ENCODE measurements at regions of chr3 and their contacts with region 1.

Region 1: GRCh38 chr3:14921078-14921616 is 26.2 kb upstream of the NR2C2 start:
- DNase-seq: peak; percentile 79
- H3K4me3 Mint-ChIP-seq: no peak overlapping the region
- H3K27ac Mint-ChIP-seq: no peak overlapping the region
- H3K4me1 Mint-ChIP-seq: no peaks in the 10 kb centered on the region
- H3K27me3 Mint-ChIP-seq: peaks cover 26% of the 10 kb centered on the region
- CTCF ChIP-seq: peak; percentile 99

Region 2: DNA sequence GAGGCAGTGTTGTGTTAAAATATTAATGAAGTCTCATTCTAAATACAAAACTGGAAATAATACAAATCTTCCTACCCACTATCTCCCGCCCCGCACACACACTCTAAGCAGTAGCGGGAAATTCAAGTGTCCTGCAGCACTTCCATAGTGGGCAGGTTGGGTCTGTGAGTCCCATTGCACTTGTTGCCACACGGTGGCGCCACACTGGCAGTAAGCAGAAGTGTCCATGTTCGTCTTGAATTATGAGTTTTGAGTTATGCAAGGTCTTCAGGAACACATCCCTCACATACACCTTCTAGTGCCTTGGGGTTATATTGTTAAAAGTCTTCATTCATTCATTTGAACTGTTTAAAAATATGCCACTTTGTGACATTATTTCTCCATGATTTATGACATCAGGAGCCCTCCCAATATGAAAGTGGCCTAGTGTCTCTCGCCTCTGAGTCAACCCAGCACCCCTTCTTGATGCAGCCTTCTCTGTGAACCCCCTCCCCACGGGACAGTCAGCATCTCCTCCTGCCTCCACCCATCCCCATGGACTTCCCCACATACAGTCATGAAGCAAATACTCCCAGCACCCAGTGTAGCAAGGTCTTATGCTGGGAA is 287.2 kb before region 1 on chr3:
- CTCF ChIA-PET with region 1: interaction called, 10 read pairs
- POLR2A ChIA-PET with region 1: no interaction called
- intact Hi-C with region 1: loop called (anchors 1 kb)
- DNase-seq: peak; percentile 73
- H3K4me3 Mint-ChIP-seq: no peak overlapping the region
- H3K27ac Mint-ChIP-seq: no peak overlapping the region
- H3K4me1 Mint-ChIP-seq: no peaks in the 10 kb centered on the region
- H3K27me3 Mint-ChIP-seq: peaks cover 13% of the 10 kb centered on the region
- CTCF ChIP-seq: peak; percentile 74

Region 3: DNA sequence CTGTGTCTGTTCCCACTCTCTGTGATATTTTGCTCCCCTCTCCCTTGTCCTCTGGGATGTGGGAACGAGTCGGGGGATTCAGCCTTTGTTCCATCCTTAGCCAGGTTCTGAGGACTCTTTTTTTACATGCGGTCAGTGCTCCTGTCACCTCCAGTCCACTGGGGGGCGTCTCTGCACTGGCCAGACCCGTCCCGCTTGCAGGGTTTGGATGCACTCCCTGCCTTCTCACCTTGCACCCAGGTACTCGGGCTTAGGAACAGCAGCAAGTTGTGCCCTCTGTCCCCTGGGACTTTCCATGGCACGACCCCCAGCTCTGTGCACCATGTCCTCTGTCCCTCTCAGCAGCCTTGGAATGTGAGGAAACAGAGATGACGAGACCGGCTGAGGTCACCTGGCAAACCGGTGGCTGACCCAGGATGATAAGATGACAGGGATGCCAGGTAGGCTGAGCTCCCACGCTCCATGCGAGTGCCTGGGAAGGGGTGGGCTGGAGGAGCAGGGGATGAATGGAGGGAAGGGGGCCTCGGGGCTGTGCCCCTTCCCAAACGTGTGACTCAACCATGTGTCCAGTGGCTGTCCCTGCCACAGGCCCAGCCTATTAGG is 129.7 kb before region 1 on chr3:
- CTCF ChIA-PET with region 1: interaction called, 6 read pairs
- POLR2A ChIA-PET with region 1: no interaction called
- intact Hi-C with region 1: loop called (anchors 1 kb)
- DNase-seq: peak; percentile 60
- H3K4me3 Mint-ChIP-seq: no peak overlapping the region
- H3K27ac Mint-ChIP-seq: no peak overlapping the region
- H3K4me1 Mint-ChIP-seq: peaks cover 4% of the 10 kb centered on the region
- H3K27me3 Mint-ChIP-seq: peaks cover 71% of the 10 kb centered on the region
- CTCF ChIP-seq: peak; percentile 55

Region 4: GRCh38 chr3:15032650-15033049 is 111.5 kb after region 1 on chr3:
- CTCF ChIA-PET with region 1: interaction called, 4 read pairs
- POLR2A ChIA-PET with region 1: no interaction called
- intact Hi-C with region 1: loop called (anchors 5 kb)
- DNase-seq: no peak
- H3K4me3 Mint-ChIP-seq: no peak overlapping the region
- H3K27ac Mint-ChIP-seq: no peak overlapping the region
- H3K4me1 Mint-ChIP-seq: no peaks in the 10 kb centered on the region
- H3K27me3 Mint-ChIP-seq: no peaks in the 10 kb centered on the region
- CTCF ChIP-seq: no peak

Region 5: DNA sequence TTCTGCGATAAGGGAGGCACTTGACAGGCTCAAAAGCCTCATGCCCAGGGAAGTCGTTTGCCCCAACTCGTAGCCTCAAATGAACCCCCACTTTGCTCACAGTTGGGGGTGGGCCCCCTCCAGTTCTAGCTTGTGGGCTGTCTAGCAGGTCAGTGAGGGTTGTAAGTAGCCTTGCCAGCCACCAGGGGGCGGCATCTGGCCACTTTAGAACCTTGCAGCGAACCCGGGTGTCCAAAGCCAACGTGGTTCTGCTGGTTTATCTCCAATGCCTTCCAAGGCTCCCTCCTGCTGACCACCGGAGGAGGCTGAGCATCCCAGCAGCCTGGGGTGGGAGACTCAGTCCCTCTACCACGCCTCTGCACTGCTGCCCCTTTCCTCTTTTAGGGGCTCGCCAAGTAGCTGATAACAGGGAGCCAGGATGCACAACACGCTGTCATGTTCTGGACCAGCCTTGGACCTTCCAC is 187.0 kb after region 1 on chr3:
- CTCF ChIA-PET with region 1: interaction called, 4 read pairs
- POLR2A ChIA-PET with region 1: no interaction called
- intact Hi-C with region 1: loop called (anchors 5 kb)
- DNase-seq: peak; percentile 75
- H3K4me3 Mint-ChIP-seq: no peak overlapping the region
- H3K27ac Mint-ChIP-seq: no peak overlapping the region
- H3K4me1 Mint-ChIP-seq: peaks cover 19% of the 10 kb centered on the region
- H3K27me3 Mint-ChIP-seq: no peaks in the 10 kb centered on the region
- CTCF ChIP-seq: peak; percentile 94